Prostate gland (tissue), 2 donors: ENCODE measurements at regions of chr6 and their contacts with region 1.

Region 1: GRCh38 chr6:29847871-29848630 is 20.4 kb downstream of the HLA-G start:
- DNase-seq: peak; percentile 69
- H3K4me3 ChIP-seq: no peak overlapping the region
- H3K27ac ChIP-seq: no peak overlapping the region
- H3K4me1 ChIP-seq: no peaks in the 10 kb centered on the region
- H3K27me3 ChIP-seq: peaks cover 4% of the 10 kb centered on the region
- CTCF ChIP-seq: peak; percentile 86 to 97 (median 92)
- POLR2A ChIP-seq: no peak

Region 2: DNA sequence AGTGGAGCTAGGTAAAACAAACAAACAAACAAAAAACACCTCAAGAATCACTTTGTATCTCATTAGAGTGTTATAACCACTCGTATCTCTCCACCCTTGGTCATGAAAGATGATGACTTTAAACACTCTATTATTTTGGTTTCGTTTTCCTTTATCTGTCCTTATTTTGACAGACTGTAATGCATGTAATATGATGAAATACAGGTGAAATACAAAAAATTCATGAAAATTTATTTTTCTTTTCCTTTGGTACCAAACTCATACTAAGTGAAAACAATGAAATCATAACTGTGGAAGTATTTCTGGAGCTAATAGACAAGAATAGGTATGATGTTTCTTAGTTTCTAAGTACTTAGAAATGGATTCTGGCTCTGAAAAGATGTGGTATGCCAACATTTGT is 448.5 kb before region 1 on chr6:
- intact Hi-C with region 1: no loop called
- DNase-seq: no peak
- H3K4me3 ChIP-seq: no peak overlapping the region
- H3K27ac ChIP-seq: no peak overlapping the region
- H3K4me1 ChIP-seq: no peaks in the 10 kb centered on the region
- H3K27me3 ChIP-seq: no peaks in the 10 kb centered on the region
- CTCF ChIP-seq: no peak
- POLR2A ChIP-seq: no peak

Region 3: GRCh38 chr6:30013291-30013922 is 165.4 kb after region 1 on chr6:
- intact Hi-C with region 1: loop called (anchors 1 kb)
- DNase-seq: no peak
- H3K4me3 ChIP-seq: no peak overlapping the region
- H3K27ac ChIP-seq: no peak overlapping the region
- H3K4me1 ChIP-seq: no peaks in the 10 kb centered on the region
- H3K27me3 ChIP-seq: no peaks in the 10 kb centered on the region
- CTCF ChIP-seq: peak; percentile 28 to 94 (median 60)
- POLR2A ChIP-seq: no peak

Region 4: GRCh38 chr6:30087876-30088275 is 239.8 kb after region 1 on chr6:
- intact Hi-C with region 1: no loop called
- DNase-seq: no peak
- H3K4me3 ChIP-seq: no peak overlapping the region
- H3K27ac ChIP-seq: no peak overlapping the region
- H3K4me1 ChIP-seq: no peaks in the 10 kb centered on the region
- H3K27me3 ChIP-seq: no peaks in the 10 kb centered on the region
- CTCF ChIP-seq: no peak
- POLR2A ChIP-seq: no peak